ENCODE measurements at regions of chr2 and their contacts with region 1.

Region 1: DNA sequence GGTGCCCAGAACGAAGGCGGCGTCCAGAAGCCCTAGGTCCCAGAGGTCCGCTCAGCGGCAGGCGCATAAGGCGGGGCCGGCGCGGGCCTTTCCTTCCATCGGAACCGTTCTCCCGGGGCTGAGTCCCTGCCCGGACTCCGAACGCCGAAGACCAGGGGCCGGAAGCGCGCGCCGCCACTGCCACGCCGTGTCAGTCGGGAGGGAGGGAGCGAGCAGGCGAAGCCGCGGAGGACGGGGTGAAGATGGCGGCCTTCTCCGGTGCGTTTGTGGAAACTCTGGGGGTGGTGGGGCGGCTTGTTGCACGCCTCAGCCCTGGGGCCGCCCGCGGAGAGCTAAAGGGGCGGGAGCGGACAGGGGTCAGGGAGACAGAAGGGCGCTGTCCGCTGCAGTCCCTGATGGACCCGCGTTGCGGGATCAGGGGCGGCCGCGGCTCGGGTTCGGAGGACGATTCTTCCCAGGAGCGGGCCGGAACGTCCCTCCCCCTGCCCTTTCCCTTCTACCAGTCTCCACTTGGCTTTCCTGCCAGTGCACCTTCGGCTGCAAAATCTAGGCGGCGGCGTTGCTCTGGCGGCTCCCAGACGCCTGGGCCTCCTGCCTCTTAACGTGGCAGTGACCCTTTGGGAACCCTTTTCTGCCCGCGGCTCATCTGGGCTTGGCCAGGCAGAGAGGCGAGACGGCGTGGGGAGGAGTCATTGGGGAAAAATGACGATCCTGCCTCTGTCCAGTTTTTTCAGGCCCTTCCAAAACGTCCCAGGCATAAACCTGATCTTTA is at the start of gene DDX1:
- DNase-seq: peak; percentile 73 to 93 (median 82)
- ATAC-seq: peak; percentile 95
- H3K4me3 ChIP-seq: peak within 1 kb of the TSS; percentile 87
- H3K4me3 Mint-ChIP-seq: peak within 1 kb of the TSS; percentile 98
- H3K27ac ChIP-seq: peak within 1 kb of the TSS; percentile 73
- H3K27ac Mint-ChIP-seq: peak within 1 kb of the TSS; percentile 89
- H3K4me1 ChIP-seq: peaks cover 14% of the 10 kb centered on the region
- H3K4me1 Mint-ChIP-seq: peaks cover 51% of the 10 kb centered on the region
- H3K27me3 ChIP-seq: no peaks in the 10 kb centered on the region
- H3K27me3 Mint-ChIP-seq: no peaks in the 10 kb centered on the region
- CTCF ChIP-seq: no peak
- total RNA-seq, gene DDX1: 48.8 to 50.1 TPM

Region 2: GRCh38 chr2:15521641-15522181 is 70.2 kb before region 1 on chr2:
- CTCF ChIA-PET with region 1: no interaction called
- POLR2A ChIA-PET with region 1: no interaction called
- intact Hi-C with region 1: no loop called
- DNase-seq: no peak
- ATAC-seq: no peak
- H3K4me3 ChIP-seq: no peak overlapping the region
- H3K4me3 Mint-ChIP-seq: no peak overlapping the region
- H3K27ac ChIP-seq: no peak overlapping the region
- H3K27ac Mint-ChIP-seq: no peak overlapping the region
- H3K4me1 ChIP-seq: no peaks in the 10 kb centered on the region
- H3K4me1 Mint-ChIP-seq: peaks cover 5% of the 10 kb centered on the region
- H3K27me3 ChIP-seq: no peaks in the 10 kb centered on the region
- H3K27me3 Mint-ChIP-seq: no peaks in the 10 kb centered on the region
- CTCF ChIP-seq: no peak

Region 3: GRCh38 chr2:15560988-15561573 is 30.8 kb before region 1 on chr2 and contains the start of gene NBAS:
- CTCF ChIA-PET with region 1: interaction called, 3 read pairs
- POLR2A ChIA-PET with region 1: interaction called, 38 read pairs
- intact Hi-C with region 1: loop called (anchors 1 to 2 kb)
- DNase-seq: peak; percentile 61 to 87 (median 72)
- ATAC-seq: peak; percentile 83
- H3K4me3 ChIP-seq: peak within 1 kb of the TSS; percentile 86
- H3K4me3 Mint-ChIP-seq: peak within 1 kb of the TSS; percentile 99
- H3K27ac ChIP-seq: peak within 1 kb of the TSS; percentile 48 to 68
- H3K27ac Mint-ChIP-seq: peak within 1 kb of the TSS; percentile 88
- H3K4me1 ChIP-seq: peaks cover 13% of the 10 kb centered on the region
- H3K4me1 Mint-ChIP-seq: peaks cover 52% of the 10 kb centered on the region
- H3K27me3 ChIP-seq: no peaks in the 10 kb centered on the region
- H3K27me3 Mint-ChIP-seq: no peaks in the 10 kb centered on the region
- CTCF ChIP-seq: no peak
- total RNA-seq, gene NBAS: 24.3 to 25.5 TPM

Region 4: GRCh38 chr2:15577071-15577735 is 14.7 kb before region 1 on chr2:
- CTCF ChIA-PET with region 1: interaction called, 18 read pairs
- POLR2A ChIA-PET with region 1: interaction called, 6 read pairs
- intact Hi-C with region 1: no loop called
- DNase-seq: peak; percentile 70 to 93 (median 87)
- ATAC-seq: peak; percentile 100
- H3K4me3 ChIP-seq: no peak overlapping the region
- H3K4me3 Mint-ChIP-seq: no peak overlapping the region
- H3K27ac ChIP-seq: no peak overlapping the region
- H3K27ac Mint-ChIP-seq: no peak overlapping the region
- H3K4me1 ChIP-seq: peaks cover 3% of the 10 kb centered on the region
- H3K4me1 Mint-ChIP-seq: no peaks in the 10 kb centered on the region
- H3K27me3 ChIP-seq: no peaks in the 10 kb centered on the region
- H3K27me3 Mint-ChIP-seq: no peaks in the 10 kb centered on the region
- CTCF ChIP-seq: peak; percentile 83

Region 5: GRCh38 chr2:15693926-15694588 is 102.2 kb after region 1 on chr2:
- CTCF ChIA-PET with region 1: no interaction called
- POLR2A ChIA-PET with region 1: no interaction called
- intact Hi-C with region 1: no loop called
- DNase-seq: no peak
- ATAC-seq: no peak
- H3K4me3 ChIP-seq: no peak overlapping the region
- H3K4me3 Mint-ChIP-seq: no peak overlapping the region
- H3K27ac ChIP-seq: no peak overlapping the region
- H3K27ac Mint-ChIP-seq: no peak overlapping the region
- H3K4me1 ChIP-seq: no peaks in the 10 kb centered on the region
- H3K4me1 Mint-ChIP-seq: no peaks in the 10 kb centered on the region
- H3K27me3 ChIP-seq: no peaks in the 10 kb centered on the region
- H3K27me3 Mint-ChIP-seq: peaks cover 4% of the 10 kb centered on the region
- CTCF ChIP-seq: no peak

Region 6: DNA sequence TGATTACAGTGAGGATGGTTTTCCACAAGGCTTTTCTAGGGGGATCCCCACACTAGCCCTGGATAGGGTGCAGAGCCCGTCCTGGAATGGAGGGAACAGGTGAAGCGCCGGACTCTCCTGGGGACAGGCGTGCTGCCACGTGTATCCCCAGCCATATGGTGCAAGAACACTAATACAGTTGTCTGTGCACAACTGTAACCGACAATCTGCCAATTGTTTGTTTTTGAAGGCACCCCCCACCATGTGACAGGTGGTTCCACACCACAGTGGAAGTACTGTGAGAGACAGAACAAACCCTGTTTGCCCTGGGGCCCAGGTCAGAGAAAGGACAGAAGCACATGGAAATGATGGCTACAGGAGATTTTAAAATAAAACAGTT is 401.3 kb after region 1 on chr2:
- CTCF ChIA-PET with region 1: no interaction called
- POLR2A ChIA-PET with region 1: no interaction called
- intact Hi-C with region 1: no loop called
- DNase-seq: no peak
- ATAC-seq: no peak
- H3K4me3 ChIP-seq: no peak overlapping the region
- H3K4me3 Mint-ChIP-seq: no peak overlapping the region
- H3K27ac ChIP-seq: no peak overlapping the region
- H3K27ac Mint-ChIP-seq: no peak overlapping the region
- H3K4me1 ChIP-seq: no peaks in the 10 kb centered on the region
- H3K4me1 Mint-ChIP-seq: no peaks in the 10 kb centered on the region
- H3K27me3 ChIP-seq: no peaks in the 10 kb centered on the region
- H3K27me3 Mint-ChIP-seq: no peaks in the 10 kb centered on the region
- CTCF ChIP-seq: no peak